CD4-positive, alpha-beta memory T cell (primary cell): ENCODE measurements at regions of chr15 and their contacts with region 1.

Region 1: GRCh38 chr15:64162870-64163658 is at the start of gene PPIB:
- DNase-seq: peak; percentile 96 to 98 (median 97)
- H3K4me3 ChIP-seq: peak within 1 kb of the TSS; percentile 68 to 71
- H3K4me3 Mint-ChIP-seq: peak within 1 kb of the TSS; percentile 81 to 95 (median 90)
- H3K27ac ChIP-seq: peak within 1 kb of the TSS; percentile 80
- H3K27ac Mint-ChIP-seq: peak within 1 kb of the TSS; percentile 85 to 98 (median 96)
- H3K4me1 ChIP-seq: peaks cover 54% of the 10 kb centered on the region
- H3K4me1 Mint-ChIP-seq: peaks cover 28 to 53% (median 40%) of the 10 kb centered on the region in 4 donors
- H3K27me3 ChIP-seq: no peaks in the 10 kb centered on the region
- H3K27me3 Mint-ChIP-seq: no peaks in the 10 kb centered on the region
- total RNA-seq, gene PPIB: 247 to 271 TPM

Region 2: DNA sequence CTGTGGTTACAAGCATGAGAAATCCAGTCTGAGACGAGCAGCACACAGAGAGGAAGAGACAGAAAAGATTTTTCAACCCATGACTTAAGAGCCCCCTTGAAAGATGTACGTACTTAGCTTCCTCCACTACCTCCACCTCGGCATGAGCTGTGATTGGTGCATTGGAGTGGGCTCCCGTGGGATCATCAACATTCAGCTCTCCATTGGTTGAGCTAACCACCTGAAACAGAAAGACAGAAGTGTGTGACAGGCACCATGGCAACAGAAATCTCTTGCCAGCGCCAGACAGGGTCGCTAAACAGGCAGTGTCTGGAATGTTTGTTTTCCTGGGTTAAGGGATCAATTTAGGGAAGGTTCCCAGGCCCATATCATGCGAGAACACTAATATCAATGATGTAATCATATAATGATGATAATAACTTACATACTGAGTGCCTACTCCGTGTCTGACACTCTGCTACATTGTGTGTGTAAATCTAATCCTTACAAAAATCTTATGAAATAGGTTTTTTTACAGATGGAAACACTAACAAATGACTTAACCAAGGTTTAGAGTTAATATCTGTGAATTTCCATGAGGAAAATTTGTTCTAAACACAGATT is 17.3 kb after region 1 on chr15:
- CTCF ChIA-PET with region 1: interaction called, 4 read pairs
- POLR2A ChIA-PET with region 1: interaction called, 12 read pairs
- intact Hi-C with region 1: no loop called
- DNase-seq: no peak
- H3K4me3 ChIP-seq: no peak overlapping the region
- H3K4me3 Mint-ChIP-seq: no peak overlapping the region
- H3K27ac ChIP-seq: no peak overlapping the region
- H3K27ac Mint-ChIP-seq: no peak overlapping the region
- H3K4me1 ChIP-seq: no peaks in the 10 kb centered on the region
- H3K4me1 Mint-ChIP-seq: no peaks in the 10 kb centered on the region
- H3K27me3 ChIP-seq: no peaks in the 10 kb centered on the region
- H3K27me3 Mint-ChIP-seq: no peaks in the 10 kb centered on the region

Region 3: DNA sequence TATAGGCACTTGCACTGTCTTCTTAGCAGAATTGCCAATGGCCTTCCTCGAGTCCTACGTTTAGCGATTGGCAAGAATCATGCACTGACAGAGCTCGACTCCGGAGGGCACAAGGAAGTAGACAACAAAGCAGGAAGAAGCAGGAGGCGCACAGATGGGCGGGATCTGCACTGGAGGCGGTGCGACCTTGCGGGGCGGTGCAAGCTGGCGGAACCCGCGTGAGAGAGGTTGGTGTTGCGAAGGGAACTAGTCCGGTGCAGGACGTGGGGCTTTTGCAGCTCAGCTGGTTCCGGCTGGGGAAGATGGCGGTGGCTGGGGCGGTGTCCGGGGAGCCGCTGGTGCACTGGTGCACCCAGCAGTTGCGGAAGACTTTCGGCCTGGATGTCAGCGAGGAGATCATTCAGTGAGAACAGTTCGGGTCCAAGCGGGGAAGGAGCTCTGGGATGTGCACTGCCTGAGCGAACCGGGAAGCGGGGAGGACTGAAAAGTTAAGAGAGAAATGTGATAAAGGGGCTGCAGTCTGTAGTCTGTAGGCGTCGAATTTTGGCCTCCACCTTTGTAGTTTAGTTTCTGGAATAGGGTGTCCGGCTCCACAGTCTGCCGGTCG is 224.6 kb after region 1 on chr15 and contains the start of gene TRIP4:
- CTCF ChIA-PET with region 1: interaction called, 4 read pairs
- POLR2A ChIA-PET with region 1: interaction called, 38 read pairs
- intact Hi-C with region 1: loop called (anchors 1 kb)
- DNase-seq: peak; percentile 95 to 98 (median 96)
- H3K4me3 ChIP-seq: peak within 1 kb of the TSS; percentile 79 to 89
- H3K4me3 Mint-ChIP-seq: peak within 1 kb of the TSS; percentile 96 to 100 (median 98)
- H3K27ac ChIP-seq: peak within 1 kb of the TSS; percentile 64
- H3K27ac Mint-ChIP-seq: peak within 1 kb of the TSS; percentile 80 to 99 (median 96)
- H3K4me1 ChIP-seq: peaks cover 12% of the 10 kb centered on the region
- H3K4me1 Mint-ChIP-seq: peaks cover 16 to 19% (median 19%) of the 10 kb centered on the region in 4 donors
- H3K27me3 ChIP-seq: no peaks in the 10 kb centered on the region
- H3K27me3 Mint-ChIP-seq: no peaks in the 10 kb centered on the region
- total RNA-seq, gene TRIP4: 28.2 to 29.4 TPM

Region 4: GRCh38 chr15:65184868-65185738 is 1022.0 kb after region 1 on chr15 and contains the start of gene CLPX:
- CTCF ChIA-PET with region 1: no interaction called
- POLR2A ChIA-PET with region 1: no interaction called
- intact Hi-C with region 1: loop called (anchors 2 kb)
- DNase-seq: peak; percentile 92 to 97 (median 95)
- H3K4me3 ChIP-seq: peak within 1 kb of the TSS; percentile 71 to 77
- H3K4me3 Mint-ChIP-seq: peak within 1 kb of the TSS; percentile 91 to 98 (median 96)
- H3K27ac ChIP-seq: peak within 1 kb of the TSS; percentile 90
- H3K27ac Mint-ChIP-seq: peak within 1 kb of the TSS; percentile 90 to 97 (median 96)
- H3K4me1 ChIP-seq: peaks cover 27% of the 10 kb centered on the region
- H3K4me1 Mint-ChIP-seq: peaks cover 13 to 39% (median 24%) of the 10 kb centered on the region in 4 donors
- H3K27me3 ChIP-seq: no peaks in the 10 kb centered on the region
- H3K27me3 Mint-ChIP-seq: no peaks in the 10 kb centered on the region
- total RNA-seq, gene CLPX: 52.0 to 52.4 TPM

Region 5: DNA sequence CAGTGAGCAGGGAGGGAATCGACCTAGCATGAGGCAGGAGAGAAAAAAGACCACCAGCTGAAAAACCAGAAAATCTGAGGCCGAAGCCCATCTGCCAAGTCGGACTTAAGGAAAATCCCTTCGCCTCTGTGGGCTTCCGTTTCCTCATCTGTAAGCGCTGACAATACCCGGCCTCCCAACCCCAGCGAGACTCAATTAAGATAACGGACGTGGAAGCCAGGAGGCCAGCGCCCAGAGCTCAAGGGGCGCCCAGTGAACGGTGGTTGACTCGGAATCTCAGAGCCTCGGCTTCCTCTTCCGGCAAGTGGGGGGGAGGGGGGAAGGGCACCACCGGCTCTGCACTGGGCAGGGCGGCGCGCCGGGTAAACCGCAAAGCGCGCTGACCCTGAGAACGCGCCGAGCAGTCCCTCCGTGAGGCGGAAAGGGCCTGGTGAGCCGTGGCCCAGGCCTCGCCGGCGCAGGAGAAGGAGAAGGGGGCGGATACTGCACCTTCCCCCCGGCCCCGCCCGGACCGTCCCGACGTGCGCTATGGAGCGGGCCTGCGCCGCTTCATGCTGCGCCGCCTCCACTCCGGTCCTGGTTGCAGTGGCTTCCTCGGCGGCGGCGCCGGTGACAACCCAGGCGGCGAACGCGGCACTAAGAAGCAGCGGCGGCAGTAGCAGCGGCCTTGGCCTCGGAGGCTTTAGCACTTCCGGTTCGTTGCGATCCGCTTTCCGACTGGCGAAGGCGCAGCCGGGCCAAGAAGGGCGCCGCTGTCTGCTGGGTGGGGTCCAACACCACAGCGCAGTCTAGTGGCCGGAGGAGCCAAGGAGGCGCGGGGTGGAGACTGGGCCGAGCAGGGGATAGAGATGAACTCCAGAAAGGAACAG is 1354.2 kb after region 1 on chr15 and contains the start of gene DPP8:
- CTCF ChIA-PET with region 1: interaction called, 3 read pairs
- POLR2A ChIA-PET with region 1: no interaction called
- intact Hi-C with region 1: loop called (anchors 2 kb)
- DNase-seq: peak; percentile 92 to 93 (median 92)
- H3K4me3 ChIP-seq: peak within 1 kb of the TSS; percentile 86 to 96
- H3K4me3 Mint-ChIP-seq: peak within 1 kb of the TSS; percentile 85 to 100 (median 95)
- H3K27ac ChIP-seq: peak within 1 kb of the TSS; percentile 85
- H3K27ac Mint-ChIP-seq: peak within 1 kb of the TSS; percentile 82 to 97 (median 97)
- H3K4me1 ChIP-seq: peaks cover 52% of the 10 kb centered on the region
- H3K4me1 Mint-ChIP-seq: peaks cover 23 to 53% (median 38%) of the 10 kb centered on the region in 4 donors
- H3K27me3 ChIP-seq: no peaks in the 10 kb centered on the region
- H3K27me3 Mint-ChIP-seq: no peaks in the 10 kb centered on the region
- total RNA-seq, gene DPP8: 54.0 to 58.6 TPM